HEK293T (cell line): ENCODE measurements at regions of chr4 and their contacts with region 1.

Region 1: GRCh38 chr4:56435306-56435926 is at the start of gene PPAT:
- DNase-seq: peak; percentile 90

Region 2: DNA sequence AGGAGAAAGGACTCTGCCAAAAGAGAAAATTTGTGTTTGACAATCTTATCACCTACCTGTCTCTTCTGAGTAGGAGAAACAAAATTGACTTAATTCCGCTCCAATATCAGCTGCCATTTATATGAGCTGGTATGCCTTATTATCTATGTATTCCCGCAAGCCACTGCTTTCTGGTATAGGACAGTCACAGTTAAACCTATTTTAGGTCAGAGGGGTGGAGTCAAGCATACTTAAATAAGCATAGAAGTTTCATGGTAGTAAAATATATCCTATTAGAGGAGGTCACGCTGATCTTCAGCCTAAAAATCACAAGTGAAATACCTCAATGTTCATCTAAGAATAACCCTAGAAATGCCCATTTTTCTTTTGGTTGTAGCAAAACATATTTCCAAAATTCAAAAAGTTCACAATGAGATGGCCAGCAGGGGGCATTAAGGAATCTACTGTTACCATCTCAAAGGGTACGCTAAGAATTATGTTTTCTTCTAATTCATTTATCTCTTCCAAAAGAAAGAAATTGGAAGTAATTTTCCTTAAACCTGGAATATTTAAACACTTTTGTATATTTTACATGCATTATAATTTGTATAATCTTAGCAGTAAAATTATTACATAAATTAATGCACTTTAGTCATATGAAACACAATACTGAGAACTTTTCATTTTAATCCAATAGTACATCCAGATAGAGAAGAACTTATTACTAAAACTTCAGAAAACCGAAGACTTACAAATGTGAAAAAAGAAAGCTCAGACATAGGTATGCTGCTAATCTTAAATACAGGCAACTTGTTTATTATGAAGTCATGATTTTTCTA is 10.5 kb before region 1 on chr4:
- CTCF ChIA-PET with region 1: interaction called, 14 read pairs
- POLR2A ChIA-PET with region 1: interaction called, 22 read pairs
- DNase-seq: peak; percentile 11

Region 3: GRCh38 chr4:56467284-56468096 is 32.1 kb after region 1 on chr4 and contains the start of gene SRP72:
- CTCF ChIA-PET with region 1: no interaction called
- POLR2A ChIA-PET with region 1: interaction called, 48 read pairs
- DNase-seq: peak; percentile 88